Natural killer cell (primary cell): ENCODE measurements at regions of chr15 and their contacts with region 1.

Region 1: GRCh38 chr15:50908210-50909009 is at the start of gene AP4E1:
- DNase-seq: peak; percentile 95 to 97
- ATAC-seq: peak; percentile 64 to 89 (median 71)
- H3K4me3 ChIP-seq: peak within 1 kb of the TSS; percentile 94
- H3K4me3 Mint-ChIP-seq: peak within 1 kb of the TSS; percentile 95
- H3K27ac ChIP-seq: peak within 1 kb of the TSS; percentile 91
- H3K27ac Mint-ChIP-seq: peak within 1 kb of the TSS; percentile 97 to 100
- H3K4me1 ChIP-seq: peaks cover 20% of the 10 kb centered on the region
- H3K4me1 Mint-ChIP-seq: peaks cover 26 to 28% of the 10 kb centered on the region in 2 donors
- H3K27me3 ChIP-seq: no peaks in the 10 kb centered on the region
- H3K27me3 Mint-ChIP-seq: no peaks in the 10 kb centered on the region
- CTCF ChIP-seq: peak; percentile 88
- total RNA-seq, gene AP4E1: 13.1 to 14.5 (median 14.1) TPM

Region 2: DNA sequence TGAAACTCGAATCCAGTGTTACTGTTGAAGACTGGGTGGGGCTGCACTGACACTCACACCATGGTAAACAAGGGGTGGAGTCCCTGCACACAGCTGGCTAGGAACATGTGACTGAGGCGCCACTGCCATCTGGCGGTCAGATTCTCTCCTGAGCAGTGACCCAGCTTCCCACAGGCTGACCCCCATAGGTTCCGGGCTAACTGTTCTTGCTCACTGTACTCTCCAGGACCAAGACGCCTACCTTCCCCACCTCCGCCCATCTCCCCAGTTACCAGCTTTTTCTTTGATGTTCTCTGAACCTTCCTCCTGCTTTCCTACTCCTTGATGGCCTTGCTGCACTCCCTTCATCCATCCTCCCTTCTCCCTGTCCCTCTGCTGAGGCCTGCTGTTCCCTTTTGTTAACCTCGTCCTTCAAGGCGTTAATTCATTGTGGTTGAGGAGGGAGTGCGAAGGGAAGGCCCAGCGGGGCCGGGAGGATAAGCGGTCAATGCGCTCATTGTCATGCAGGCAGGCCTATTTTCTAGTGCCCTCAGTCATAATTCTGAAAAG is 904.5 kb before region 1 on chr15:
- intact Hi-C with region 1: loop called (anchors 5 kb)
- DNase-seq: peak; percentile 74 to 79
- ATAC-seq: peak; percentile 97 to 99 (median 99)
- H3K4me3 ChIP-seq: no peak overlapping the region
- H3K4me3 Mint-ChIP-seq: peak overlapping the region; percentile 75
- H3K27ac ChIP-seq: peak overlapping the region; percentile 66
- H3K27ac Mint-ChIP-seq: peak overlapping the region; percentile 88 to 95
- H3K4me1 ChIP-seq: peaks cover 13% of the 10 kb centered on the region
- H3K4me1 Mint-ChIP-seq: peaks cover 25 to 30% of the 10 kb centered on the region in 2 donors
- H3K27me3 ChIP-seq: no peaks in the 10 kb centered on the region
- H3K27me3 Mint-ChIP-seq: no peaks in the 10 kb centered on the region
- CTCF ChIP-seq: peak; percentile 73

Region 3: GRCh38 chr15:50260969-50261496 is 647.4 kb before region 1 on chr15:
- intact Hi-C with region 1: loop called (anchors 2 kb)
- DNase-seq: no peak
- ATAC-seq: peak in 2 of 3 donors; percentile 3 to 64
- H3K4me3 ChIP-seq: no peak overlapping the region
- H3K4me3 Mint-ChIP-seq: peak overlapping the region; percentile 72
- H3K27ac ChIP-seq: no peak overlapping the region
- H3K27ac Mint-ChIP-seq: peak overlapping the region; percentile 86 to 88
- H3K4me1 ChIP-seq: peaks cover 47% of the 10 kb centered on the region
- H3K4me1 Mint-ChIP-seq: peaks cover 40 to 42% of the 10 kb centered on the region in 2 donors
- H3K27me3 ChIP-seq: no peaks in the 10 kb centered on the region
- H3K27me3 Mint-ChIP-seq: no peaks in the 10 kb centered on the region
- CTCF ChIP-seq: no peak

Region 4: DNA sequence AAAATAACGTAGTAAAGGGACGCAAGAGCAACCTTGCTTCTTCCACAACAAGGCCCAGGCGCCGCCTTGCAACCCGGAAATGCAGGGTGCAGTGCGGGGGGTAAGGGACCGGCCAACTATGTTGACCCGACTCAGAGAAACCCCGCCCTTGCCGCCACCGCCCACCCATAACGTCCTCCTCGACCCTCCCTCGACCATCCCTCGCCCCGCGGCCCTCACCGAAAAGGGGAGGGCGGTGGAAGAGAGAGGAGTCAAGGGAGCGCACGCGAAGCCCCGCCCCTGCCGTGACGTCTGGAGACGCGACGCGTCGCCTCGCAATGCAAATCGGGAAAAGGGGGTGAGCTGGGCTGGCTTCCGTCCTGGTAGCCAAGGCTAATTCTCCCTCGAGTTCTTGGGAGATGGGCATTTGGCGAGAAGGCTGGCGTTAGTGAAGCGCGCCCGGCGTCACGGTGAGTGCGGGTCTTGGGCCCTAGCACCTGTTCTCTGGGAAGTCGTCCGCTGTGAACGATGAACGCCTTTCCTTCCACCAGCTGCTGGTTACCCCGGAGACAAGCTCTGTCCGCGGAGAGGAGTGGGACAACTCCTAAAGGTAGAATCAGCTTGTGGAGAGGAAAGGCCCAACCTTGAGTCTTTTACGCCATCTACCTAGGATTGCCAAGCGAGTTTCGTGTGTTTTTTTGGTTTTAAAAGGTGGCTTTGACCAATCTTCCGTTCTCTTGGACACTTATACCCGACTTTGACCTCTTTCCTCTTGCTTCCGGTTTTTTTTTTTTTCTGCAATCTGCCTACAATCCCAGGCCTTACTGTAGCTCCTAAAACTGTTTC is 484.1 kb before region 1 on chr15 and contains the start of gene USP8:
- intact Hi-C with region 1: loop called (anchors 1 kb)
- DNase-seq: peak; percentile 93 to 97
- ATAC-seq: peak; percentile 95 to 97 (median 95)
- H3K4me3 ChIP-seq: peak within 1 kb of the TSS; percentile 98
- H3K4me3 Mint-ChIP-seq: peak within 1 kb of the TSS; percentile 99
- H3K27ac ChIP-seq: peak within 1 kb of the TSS; percentile 90
- H3K27ac Mint-ChIP-seq: peak within 1 kb of the TSS; percentile 96 to 98
- H3K4me1 ChIP-seq: peaks cover 11% of the 10 kb centered on the region
- H3K4me1 Mint-ChIP-seq: peaks cover 36 to 39% of the 10 kb centered on the region in 2 donors
- H3K27me3 ChIP-seq: no peaks in the 10 kb centered on the region
- H3K27me3 Mint-ChIP-seq: no peaks in the 10 kb centered on the region
- CTCF ChIP-seq: no peak
- total RNA-seq, gene USP8: 81.0 to 87.7 (median 81.4) TPM

Region 5: GRCh38 chr15:50686468-50687301 is 221.7 kb before region 1 on chr15 and contains the start of gene TRPM7:
- intact Hi-C with region 1: loop called (anchors 1 kb)
- DNase-seq: peak; percentile 92 to 96
- ATAC-seq: peak; percentile 76 to 96 (median 88)
- H3K4me3 ChIP-seq: peak within 1 kb of the TSS; percentile 91
- H3K4me3 Mint-ChIP-seq: peak within 1 kb of the TSS; percentile 99
- H3K27ac ChIP-seq: peak within 1 kb of the TSS; percentile 94
- H3K27ac Mint-ChIP-seq: peak within 1 kb of the TSS; percentile 97
- H3K4me1 ChIP-seq: peaks cover 20% of the 10 kb centered on the region
- H3K4me1 Mint-ChIP-seq: peaks cover 42 to 49% of the 10 kb centered on the region in 2 donors
- H3K27me3 ChIP-seq: no peaks in the 10 kb centered on the region
- H3K27me3 Mint-ChIP-seq: no peaks in the 10 kb centered on the region
- CTCF ChIP-seq: no peak
- total RNA-seq, gene TRPM7: 41.8 to 54.4 (median 50.9) TPM

Region 6: DNA sequence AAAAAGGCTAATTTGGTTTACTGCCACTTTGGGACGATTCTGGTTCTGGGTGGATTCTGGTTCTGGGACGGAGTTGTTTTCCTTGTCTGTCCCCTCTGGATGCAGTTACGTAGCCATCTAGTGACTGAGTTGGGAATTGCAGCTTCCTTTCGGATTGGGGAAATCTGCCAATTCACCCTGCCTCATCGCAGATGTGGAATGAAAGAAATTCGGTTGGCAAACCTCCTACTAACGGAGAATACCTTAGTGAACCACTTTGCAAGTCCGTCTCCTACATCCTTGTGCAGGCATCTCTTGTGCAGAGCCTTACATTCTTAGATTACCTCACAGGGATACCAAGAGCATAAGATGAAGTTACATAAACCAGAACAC is 31.4 kb before region 1 on chr15:
- intact Hi-C with region 1: loop called (anchors 5 kb)
- DNase-seq: peak; percentile 50 to 88
- ATAC-seq: peak; percentile 49 to 65 (median 59)
- H3K4me3 ChIP-seq: peak overlapping the region; percentile 30
- H3K4me3 Mint-ChIP-seq: peak overlapping the region; percentile 82
- H3K27ac ChIP-seq: no peak overlapping the region
- H3K27ac Mint-ChIP-seq: peak overlapping the region; percentile 56 to 79
- H3K4me1 ChIP-seq: peaks cover 16% of the 10 kb centered on the region
- H3K4me1 Mint-ChIP-seq: peaks cover 24 to 38% of the 10 kb centered on the region in 2 donors
- H3K27me3 ChIP-seq: no peaks in the 10 kb centered on the region
- H3K27me3 Mint-ChIP-seq: peaks cover 7 to 8% of the 10 kb centered on the region in 2 donors
- CTCF ChIP-seq: peak; percentile 99

Region 7: GRCh38 chr15:50979041-50979440 is 70.6 kb after region 1 on chr15:
- intact Hi-C with region 1: no loop called
- DNase-seq: no peak
- ATAC-seq: peak; percentile 61 to 77 (median 66)
- H3K4me3 ChIP-seq: no peak overlapping the region
- H3K4me3 Mint-ChIP-seq: peak overlapping the region; percentile 53
- H3K27ac ChIP-seq: no peak overlapping the region
- H3K27ac Mint-ChIP-seq: peak overlapping the region; percentile 29 to 70
- H3K4me1 ChIP-seq: no peaks in the 10 kb centered on the region
- H3K4me1 Mint-ChIP-seq: peaks cover 20 to 22% of the 10 kb centered on the region in 2 donors
- H3K27me3 ChIP-seq: no peaks in the 10 kb centered on the region
- H3K27me3 Mint-ChIP-seq: no peaks in the 10 kb centered on the region
- CTCF ChIP-seq: no peak

Region 8: DNA sequence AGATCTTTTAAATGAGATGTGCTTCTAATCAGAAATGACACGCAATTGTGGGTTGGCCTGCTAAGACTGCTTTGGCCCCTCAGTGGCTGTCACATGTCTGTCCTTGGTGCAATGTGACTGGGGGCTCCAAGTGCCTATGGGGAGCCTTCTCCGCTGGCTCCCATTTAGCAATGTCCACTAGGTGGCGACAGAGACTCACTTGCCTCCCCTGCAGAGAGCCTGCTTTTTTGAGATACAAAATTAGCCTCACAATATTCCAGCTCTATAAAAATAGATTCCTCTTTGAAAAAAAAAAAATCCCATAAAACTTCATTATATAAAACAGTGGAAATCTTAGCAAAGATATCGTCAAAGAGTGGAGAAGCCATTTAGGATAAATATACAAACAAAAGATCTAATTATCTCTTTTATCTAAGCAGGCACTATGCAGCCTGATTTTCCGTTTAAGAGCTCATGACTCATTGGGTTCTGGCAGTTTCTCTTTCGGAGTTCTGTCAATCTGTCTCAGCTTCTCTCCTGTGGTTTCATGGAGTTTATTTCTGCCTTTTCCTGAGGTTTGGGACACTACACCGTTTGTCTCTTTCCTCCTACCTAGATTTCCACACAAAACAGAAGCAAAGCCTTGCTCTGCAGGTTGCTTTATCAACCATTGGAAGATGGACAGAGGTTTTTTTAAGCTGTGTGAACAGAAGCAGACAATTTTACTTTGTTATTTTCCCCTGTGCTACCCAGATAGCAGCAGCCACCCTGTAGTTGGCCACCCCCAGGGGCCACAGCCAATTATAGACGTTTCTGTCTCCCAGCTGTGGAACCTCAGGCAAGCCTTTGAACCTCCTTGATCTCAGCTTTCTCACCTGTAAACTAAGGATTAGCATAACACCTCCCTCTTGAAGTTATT is 254.7 kb after region 1 on chr15:
- intact Hi-C with region 1: no loop called
- DNase-seq: peak; percentile 31 to 72
- ATAC-seq: peak; percentile 59 to 92 (median 77)
- H3K4me3 ChIP-seq: no peak overlapping the region
- H3K4me3 Mint-ChIP-seq: no peak overlapping the region
- H3K27ac ChIP-seq: no peak overlapping the region
- H3K27ac Mint-ChIP-seq: no peak overlapping the region
- H3K4me1 ChIP-seq: no peaks in the 10 kb centered on the region
- H3K4me1 Mint-ChIP-seq: no peaks in the 10 kb centered on the region
- H3K27me3 ChIP-seq: peaks cover 3% of the 10 kb centered on the region
- H3K27me3 Mint-ChIP-seq: peaks cover 21 to 38% of the 10 kb centered on the region in 2 donors
- CTCF ChIP-seq: peak; percentile 93